AG04450 (cell line): ENCODE measurements at regions of chr12 and their contacts with region 1.

Region 1: DNA sequence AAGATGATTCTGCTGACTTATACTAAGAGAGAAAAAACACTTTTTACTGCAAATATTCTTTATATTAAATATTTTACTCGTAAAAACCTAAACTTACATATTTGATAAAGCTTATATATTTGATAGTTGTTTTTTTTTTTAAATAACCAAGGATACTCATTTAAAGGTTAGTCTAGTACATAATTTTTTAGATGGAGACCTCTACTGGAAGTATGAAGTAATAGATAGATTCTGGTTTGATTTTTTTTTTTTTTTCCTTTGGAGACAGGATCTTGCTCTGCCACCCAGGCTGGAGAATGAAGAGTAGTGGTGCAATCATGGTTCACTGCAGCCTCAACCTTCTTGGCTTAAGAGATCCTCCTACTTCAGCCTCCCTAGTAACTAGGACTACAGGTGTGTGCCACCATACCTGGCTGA is 16.4 kb downstream of the ARID2 start:
- DNase-seq: no peak
- H3K4me3 ChIP-seq: no peak overlapping the region
- H3K27ac ChIP-seq: no peak overlapping the region
- H3K27me3 ChIP-seq: no peaks in the 10 kb centered on the region
- CTCF ChIP-seq: peak; percentile 32

Region 2: DNA sequence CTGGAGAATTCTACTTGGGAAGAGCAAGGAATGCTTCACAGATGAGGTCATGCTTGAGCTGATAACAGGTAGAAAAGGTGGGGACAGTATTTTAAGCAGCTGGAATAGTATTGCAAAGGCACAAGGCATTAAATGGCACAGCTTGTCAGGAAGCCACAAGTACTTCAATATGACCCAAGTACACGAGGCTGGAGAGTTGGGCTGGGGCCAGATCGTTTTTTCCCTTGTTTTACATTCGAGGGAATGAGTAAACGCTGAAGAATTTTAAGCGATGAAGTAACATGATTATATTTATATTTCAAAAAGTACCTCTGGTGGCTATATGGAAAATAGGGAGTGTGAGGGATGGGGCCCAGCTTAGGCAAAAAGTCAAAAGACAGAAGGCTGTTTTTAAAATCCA is 71.3 kb before region 1 on chr12:
- CTCF ChIA-PET with region 1: no interaction called
- POLR2A ChIA-PET with region 1: no interaction called
- DNase-seq: peak; percentile 76
- H3K4me3 ChIP-seq: no peak overlapping the region
- H3K27ac ChIP-seq: no peak overlapping the region
- H3K27me3 ChIP-seq: no peaks in the 10 kb centered on the region
- CTCF ChIP-seq: no peak

Region 3: DNA sequence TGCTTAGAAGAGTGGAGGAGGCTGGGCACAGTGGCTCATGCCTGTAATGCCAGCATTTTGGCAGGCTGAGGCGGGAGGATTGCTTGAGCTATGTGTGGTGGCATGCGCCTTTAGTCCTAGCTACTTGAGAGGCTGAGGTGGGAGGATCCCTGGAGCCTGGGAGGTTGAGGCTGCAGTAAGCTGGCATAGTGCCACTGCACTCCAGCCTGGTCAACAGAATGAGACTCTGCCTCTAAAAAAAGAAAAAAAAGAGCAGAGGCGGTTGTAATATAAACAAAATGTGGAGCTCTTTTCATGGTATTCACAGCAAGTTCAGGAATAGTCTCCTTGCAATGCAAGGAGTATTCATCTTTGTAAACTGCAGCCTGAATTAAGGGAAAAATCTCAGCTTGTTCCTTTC is 10.8 kb after region 1 on chr12:
- CTCF ChIA-PET with region 1: interaction called, 44 read pairs
- POLR2A ChIA-PET with region 1: no interaction called
- DNase-seq: peak; percentile 7
- H3K4me3 ChIP-seq: no peak overlapping the region
- H3K27ac ChIP-seq: no peak overlapping the region
- H3K27me3 ChIP-seq: no peaks in the 10 kb centered on the region
- CTCF ChIP-seq: no peak